Ovary (tissue), 10 donors: ENCODE measurements at regions of chr13 and their contacts with region 1.

Region 1: DNA sequence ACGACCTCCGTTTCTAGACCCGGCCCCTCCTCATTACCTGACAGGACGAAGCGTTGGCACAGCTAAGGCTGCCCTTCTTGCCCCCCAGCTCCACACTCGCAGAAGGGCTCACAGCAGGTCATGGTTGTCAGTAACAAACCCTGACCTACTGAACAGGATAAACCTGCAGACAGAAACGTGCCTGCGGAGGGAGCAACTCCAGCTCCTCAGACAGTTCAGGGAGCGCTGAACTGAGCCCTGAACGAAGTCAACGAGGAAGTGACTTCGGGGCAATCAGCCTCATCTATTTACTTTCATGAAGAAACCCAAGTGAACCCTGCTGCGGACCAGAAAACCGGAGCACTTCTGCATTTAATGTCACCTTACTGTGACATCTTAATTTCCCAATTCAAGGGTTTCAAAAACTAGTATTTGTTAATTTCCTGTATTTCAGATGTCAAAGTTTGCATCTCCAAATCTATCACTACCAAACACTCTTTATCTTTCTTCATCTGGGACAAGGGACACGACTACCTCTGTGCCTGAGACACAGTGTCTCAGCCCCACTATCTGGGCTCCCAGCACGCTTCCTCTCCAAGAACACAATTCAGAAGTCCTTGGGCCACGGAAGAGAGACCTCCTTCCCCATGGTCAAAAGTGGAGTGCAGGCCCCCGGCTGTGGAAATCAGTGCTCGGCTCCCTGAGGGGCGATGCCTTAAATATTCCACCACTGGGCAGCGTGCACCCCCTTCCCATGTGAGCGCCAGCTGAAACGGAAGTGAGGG is 40.2 kb downstream of the CARS2 start:
- DNase-seq: no peak
- H3K4me3 ChIP-seq: no peak overlapping the region
- H3K27ac ChIP-seq: no peak overlapping the region
- H3K4me1 ChIP-seq: no peaks in the 10 kb centered on the region
- H3K27me3 ChIP-seq: no peaks in the 10 kb centered on the region
- CTCF ChIP-seq: no peak
- EP300 ChIP-seq: no peak
- POLR2A ChIP-seq: no peak

Region 2: GRCh38 chr13:109537584-109537983 is 1128.1 kb before region 1 on chr13:
- intact Hi-C with region 1: loop called in 1 of 4 experiments (anchors 5 kb)
- DNase-seq: no peak
- H3K4me3 ChIP-seq: no peak overlapping the region
- H3K27ac ChIP-seq: no peak overlapping the region
- H3K4me1 ChIP-seq: peaks cover 3% of the 10 kb centered on the region
- H3K27me3 ChIP-seq: no peaks in the 10 kb centered on the region
- CTCF ChIP-seq: no peak
- EP300 ChIP-seq: no peak
- POLR2A ChIP-seq: no peak